Heart right ventricle (tissue), 16 donors: ENCODE measurements at regions of chrX and their contacts with region 1.

Region 1: GRCh38 chrX:9519546-9520216 is 54.8 kb downstream of the TBL1X start:
- DNase-seq: no peak
- ATAC-seq: peak in 1 of 8 donors; percentile 72
- H3K4me3 ChIP-seq: no peak overlapping the region
- H3K27ac ChIP-seq: no peak overlapping the region
- H3K4me1 ChIP-seq: peaks cover 0 to 19% (median 0%) of the 10 kb centered on the region in 9 donors
- H3K27me3 ChIP-seq: peaks cover 0 to 8% (median 0%) of the 10 kb centered on the region in 7 donors
- CTCF ChIP-seq: no peak

Region 2: GRCh38 chrX:7889680-7890079 is 1630.0 kb before region 1 on chrX:
- intact Hi-C with region 1: loop called in 1 of 10 experiments (anchors 5 kb)
- DNase-seq: no peak
- ATAC-seq: no peak
- H3K4me3 ChIP-seq: no peak overlapping the region
- H3K27ac ChIP-seq: no peak overlapping the region
- H3K4me1 ChIP-seq: peaks cover 0 to 3% (median 0%) of the 10 kb centered on the region in 9 donors
- H3K27me3 ChIP-seq: no peaks in the 10 kb centered on the region
- CTCF ChIP-seq: no peak

Region 3: GRCh38 chrX:9486764-9487387 is 32.8 kb before region 1 on chrX:
- intact Hi-C with region 1: loop called in 1 of 10 experiments (anchors 5 kb)
- DNase-seq: no peak
- ATAC-seq: no peak
- H3K4me3 ChIP-seq: no peak overlapping the region
- H3K27ac ChIP-seq: no peak overlapping the region
- H3K4me1 ChIP-seq: no peaks in the 10 kb centered on the region
- H3K27me3 ChIP-seq: peaks cover 0 to 12% (median 0%) of the 10 kb centered on the region in 7 donors
- CTCF ChIP-seq: no peak

Region 4: GRCh38 chrX:9717376-9717775 is 197.7 kb after region 1 on chrX:
- intact Hi-C with region 1: no loop called
- DNase-seq: no peak
- ATAC-seq: no peak
- H3K4me3 ChIP-seq: no peak overlapping the region
- H3K27ac ChIP-seq: no peak overlapping the region
- H3K4me1 ChIP-seq: no peaks in the 10 kb centered on the region
- H3K27me3 ChIP-seq: no peaks in the 10 kb centered on the region
- CTCF ChIP-seq: no peak